Tibial artery (tissue), 4 donors: ENCODE measurements at regions of chr1 and their contacts with region 1.

Region 1: DNA sequence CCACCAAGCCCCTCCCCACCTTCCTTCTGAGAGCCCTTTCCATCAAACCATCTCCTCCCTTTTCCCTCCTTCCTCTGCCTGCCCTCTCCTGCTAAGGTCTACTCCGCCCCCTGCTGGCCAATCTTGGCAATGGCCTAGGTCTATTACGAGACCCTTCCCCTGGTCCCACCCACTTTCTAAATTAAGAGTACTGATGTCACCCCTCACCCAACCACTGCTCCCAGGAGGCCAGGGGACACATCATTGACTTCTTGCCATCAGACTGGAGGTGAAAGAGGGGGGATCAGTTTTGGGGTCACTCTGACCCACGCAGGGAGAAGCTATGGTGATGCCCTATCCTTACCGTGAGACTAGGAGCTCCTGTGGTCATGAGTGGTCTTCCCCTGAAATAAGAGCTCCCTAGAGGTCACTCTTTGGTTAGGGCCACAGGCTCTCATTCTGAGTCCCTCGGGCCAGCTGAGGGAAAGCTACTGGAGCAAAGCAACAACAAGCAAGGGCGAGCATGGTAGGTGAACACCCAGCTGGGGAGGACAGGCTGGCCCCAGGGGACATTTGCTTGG is 34.6 kb upstream of the S100A7 start:
- DNase-seq: peak; percentile 79
- H3K4me3 ChIP-seq: no peak overlapping the region
- H3K27ac ChIP-seq: no peak overlapping the region
- H3K4me1 ChIP-seq: peaks cover 0 to 51% (median 27%) of the 10 kb centered on the region in 4 donors
- H3K27me3 ChIP-seq: no peaks in the 10 kb centered on the region
- CTCF ChIP-seq: peak; percentile 88 to 97

Region 2: DNA sequence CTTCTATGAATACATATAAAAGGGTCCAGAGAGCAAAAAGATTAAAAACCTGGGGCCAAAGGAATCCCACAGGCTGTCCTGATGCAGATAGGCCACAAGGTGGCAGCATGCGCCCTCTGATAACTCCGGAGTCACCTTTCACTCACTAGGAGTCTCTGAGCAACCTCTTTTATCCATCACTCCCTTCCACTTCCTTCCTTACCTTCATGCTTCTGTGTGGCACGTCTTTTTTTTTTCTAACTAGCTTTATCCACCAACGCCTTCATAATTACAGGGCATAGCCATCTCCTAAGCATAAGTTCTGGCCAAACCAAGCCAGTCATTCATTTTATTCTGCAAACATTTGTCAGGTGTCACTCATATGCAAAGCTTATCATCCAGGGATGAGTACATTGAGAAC is 142.5 kb before region 1 on chr1:
- intact Hi-C with region 1: loop called (anchors 5 kb)
- DNase-seq: peak in 1 of 2 donors; percentile 50
- H3K4me3 ChIP-seq: no peak overlapping the region
- H3K27ac ChIP-seq: no peak overlapping the region
- H3K4me1 ChIP-seq: no peaks in the 10 kb centered on the region
- H3K27me3 ChIP-seq: peaks cover 0 to 33% of the 10 kb centered on the region in 2 donors
- CTCF ChIP-seq: peak; percentile 83 to 88

Region 3: GRCh38 chr1:153465811-153466636 is 29.0 kb before region 1 on chr1:
- intact Hi-C with region 1: loop called (anchors 2 kb)
- DNase-seq: peak; percentile 27 to 77
- H3K4me3 ChIP-seq: no peak overlapping the region
- H3K27ac ChIP-seq: no peak overlapping the region
- H3K4me1 ChIP-seq: peaks cover 0 to 19% (median 7%) of the 10 kb centered on the region in 4 donors
- H3K27me3 ChIP-seq: no peaks in the 10 kb centered on the region
- CTCF ChIP-seq: peak; percentile 80 to 82